IMR-90 (cell line): ENCODE measurements at regions of chr17 and their contacts with region 1.

Region 1: DNA sequence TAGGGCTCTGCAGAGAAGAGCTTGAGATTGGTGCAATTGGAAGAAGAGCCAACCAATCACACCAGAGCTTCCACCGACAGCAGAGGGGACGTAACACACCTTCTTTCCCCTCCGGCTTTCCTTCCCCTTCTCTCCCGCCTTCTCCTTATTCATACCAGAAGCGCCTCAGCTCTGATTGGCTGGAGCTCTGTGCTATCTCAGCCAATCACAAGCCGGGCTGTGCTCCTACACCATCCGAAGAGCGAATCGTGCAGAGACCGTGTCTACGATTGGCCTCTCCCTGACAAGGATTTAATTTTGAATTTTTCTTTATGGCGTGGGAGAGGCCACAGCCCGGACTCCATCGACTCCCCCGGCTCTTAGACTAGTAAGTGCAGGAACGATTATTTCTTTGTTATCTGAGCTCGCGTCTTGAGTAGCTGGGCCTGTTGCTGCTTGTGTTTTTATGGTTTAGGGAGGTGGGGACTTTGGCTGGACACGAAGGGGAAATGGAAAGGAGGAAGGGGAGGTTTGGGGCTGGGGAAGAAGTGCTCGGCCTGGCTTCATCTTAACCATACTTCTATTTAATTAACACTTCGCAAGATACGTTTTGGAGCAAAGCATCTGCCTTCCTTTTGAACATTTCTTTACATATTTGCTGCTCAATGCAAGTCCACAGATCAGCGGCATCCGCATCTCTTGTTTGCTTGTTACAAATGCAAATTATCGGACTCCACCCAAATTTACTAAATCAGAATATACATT is at the start of gene PRR11:
- DNase-seq: peak; percentile 100
- ATAC-seq: peak; percentile 85
- H3K4me3 ChIP-seq: peak within 1 kb of the TSS; percentile 73
- H3K27ac ChIP-seq: peak within 1 kb of the TSS; percentile 89
- H3K4me1 ChIP-seq: 0 out of 2 replicates have a peak, but pooled peaks cover 1% of the 10 kb centered on the region
- H3K27me3 ChIP-seq: no peaks in the 10 kb centered on the region
- CTCF ChIP-seq: no peak
- POLR2A ChIP-seq: no peak; the same call in 1 of the 2 replicates
- RAD21 ChIP-seq: no peak
- total RNA-seq, gene PRR11: 8.6 and 19.7 TPM in 2 replicates

Region 2: DNA sequence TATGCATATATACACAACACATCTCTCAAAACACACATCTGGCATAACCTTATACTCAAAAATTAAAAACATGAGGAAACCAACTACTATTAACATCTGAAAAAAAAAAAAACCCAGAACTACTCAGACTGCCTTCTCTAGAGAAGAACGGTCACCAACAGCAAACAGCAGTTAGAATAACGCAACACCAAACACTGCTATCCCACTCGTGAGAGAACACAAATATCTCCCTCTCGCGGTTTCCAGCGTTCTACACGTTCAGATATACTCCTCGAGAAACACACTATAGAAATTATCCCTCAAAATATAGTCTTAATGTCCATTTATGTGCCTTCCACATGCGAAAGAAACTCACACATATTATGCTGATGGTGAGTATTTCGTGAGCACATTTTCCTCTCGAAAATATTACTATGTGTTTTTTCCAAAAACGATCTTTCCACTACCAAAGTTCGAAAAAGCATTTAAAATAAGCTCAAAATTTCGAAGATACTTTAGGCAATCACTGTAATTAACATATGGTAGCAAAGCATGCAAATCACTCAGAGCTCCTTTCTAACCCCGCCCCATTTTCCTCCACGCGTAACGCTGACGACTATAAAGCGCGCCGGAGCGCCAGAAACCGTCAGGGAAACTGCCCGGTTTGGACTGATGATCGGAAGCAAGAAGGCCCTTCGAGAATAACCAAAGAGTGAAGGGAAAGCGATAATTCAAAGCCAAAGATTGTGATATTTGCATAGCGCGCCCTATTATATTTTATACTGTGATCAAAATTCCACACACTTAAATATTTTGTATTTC is 523.9 kb before region 1 on chr17:
- CTCF ChIA-PET with region 1: no interaction called
- POLR2A ChIA-PET with region 1: no interaction called
- dilution Hi-C with region 1: no loop called
- in situ Hi-C with region 1: no loop called
- intact Hi-C with region 1: loop called (anchors 10 kb)
- DNase-seq: peak; percentile 99
- ATAC-seq: peak; percentile 94
- H3K4me3 ChIP-seq: peak overlapping the region; percentile 42; the same call in 1 of the 2 replicates
- H3K27ac ChIP-seq: peak overlapping the region; percentile 68; the same call in 1 of the 2 replicates
- H3K4me1 ChIP-seq: no peaks in the 10 kb centered on the region
- H3K27me3 ChIP-seq: no peaks in the 10 kb centered on the region
- CTCF ChIP-seq: 0 out of 2 replicates have a peak, but pooled peaks have one; percentile 22
- POLR2A ChIP-seq: peak; percentile 100
- RAD21 ChIP-seq: no peak

Region 3: DNA sequence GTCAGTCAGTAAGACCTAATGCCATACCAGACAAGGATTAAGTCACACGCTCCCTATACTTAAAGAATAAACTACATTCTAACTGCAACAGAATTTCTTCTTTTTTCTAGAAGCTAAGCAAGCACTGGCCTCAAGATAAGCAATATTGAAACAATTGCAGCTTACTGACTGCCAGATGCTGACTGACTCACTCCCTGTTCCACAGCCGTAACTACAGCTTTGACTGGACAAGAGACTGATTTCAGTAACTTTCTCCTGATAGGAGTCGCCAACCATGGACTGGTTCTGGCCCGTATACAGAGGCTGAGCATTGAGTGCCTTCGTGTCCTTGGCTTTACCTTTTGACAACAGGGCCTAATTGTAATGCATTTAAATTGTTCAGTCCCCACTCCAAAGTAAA is 116.9 kb before region 1 on chr17:
- CTCF ChIA-PET with region 1: no interaction called
- POLR2A ChIA-PET with region 1: no interaction called
- dilution Hi-C with region 1: no loop called
- in situ Hi-C with region 1: no loop called
- intact Hi-C with region 1: loop called (anchors 1 kb)
- DNase-seq: peak; percentile 88
- ATAC-seq: peak; percentile 93
- H3K4me3 ChIP-seq: no peak overlapping the region
- H3K27ac ChIP-seq: peak overlapping the region; percentile 33; the same call in 1 of the 2 replicates
- H3K4me1 ChIP-seq: peaks cover 4% of the 10 kb centered on the region
- H3K27me3 ChIP-seq: no peaks in the 10 kb centered on the region
- CTCF ChIP-seq: no peak
- POLR2A ChIP-seq: no peak
- RAD21 ChIP-seq: no peak

Region 4: GRCh38 chr17:59074494-59074893 is 81.1 kb before region 1 on chr17:
- CTCF ChIA-PET with region 1: interaction called, 10 read pairs
- POLR2A ChIA-PET with region 1: no interaction called
- dilution Hi-C with region 1: no loop called
- in situ Hi-C with region 1: no loop called
- intact Hi-C with region 1: no loop called
- DNase-seq: peak; percentile 81
- ATAC-seq: peak; percentile 73
- H3K4me3 ChIP-seq: no peak overlapping the region
- H3K27ac ChIP-seq: no peak overlapping the region
- H3K4me1 ChIP-seq: no peaks in the 10 kb centered on the region
- H3K27me3 ChIP-seq: no peaks in the 10 kb centered on the region
- CTCF ChIP-seq: no peak
- POLR2A ChIP-seq: no peak
- RAD21 ChIP-seq: no peak

Region 5: DNA sequence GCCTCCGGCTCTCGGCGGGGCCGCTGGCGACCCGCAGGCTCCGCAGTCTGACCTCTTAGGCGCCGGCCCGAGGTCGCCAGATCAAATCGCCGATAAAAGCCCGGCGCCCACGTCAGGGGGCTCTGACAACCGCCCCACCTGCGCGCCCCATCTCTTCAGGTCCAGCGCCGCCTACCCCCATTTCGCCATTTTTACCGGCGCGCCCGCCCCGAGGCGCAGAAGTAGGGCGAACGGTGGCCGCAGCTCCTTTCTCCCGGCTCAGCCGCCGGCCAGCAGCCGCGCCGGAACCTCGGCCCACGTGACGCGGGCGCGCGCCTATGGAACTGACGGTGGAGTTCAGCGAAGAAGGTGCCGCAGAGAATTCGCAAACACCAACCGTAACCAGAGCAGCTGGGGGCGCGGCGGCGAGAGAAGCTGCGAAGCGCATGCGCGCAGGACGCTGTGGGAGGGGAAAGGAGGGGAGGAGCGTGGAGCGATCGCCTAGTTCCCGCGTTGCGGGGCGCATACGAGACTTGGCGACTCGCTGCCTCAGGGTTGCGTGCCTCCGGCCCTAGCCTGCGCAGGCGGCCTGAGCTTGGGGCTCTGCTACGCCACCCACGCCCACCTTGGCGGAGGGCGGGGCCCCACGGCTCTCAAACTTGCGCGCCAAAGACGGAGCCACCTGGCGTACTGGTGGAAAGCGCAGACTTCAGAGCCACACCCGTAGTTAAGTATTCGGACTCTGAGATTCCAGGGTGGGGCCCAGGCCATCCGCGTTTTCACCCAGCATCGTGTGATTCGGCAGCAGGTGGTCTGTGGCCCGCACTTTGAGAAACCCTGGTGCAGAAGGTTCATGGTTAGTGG is 48.9 kb before region 1 on chr17 and contains the start of gene TRIM37:
- CTCF ChIA-PET with region 1: no interaction called
- POLR2A ChIA-PET with region 1: interaction called, 3 read pairs
- dilution Hi-C with region 1: no loop called
- in situ Hi-C with region 1: no loop called
- intact Hi-C with region 1: loop called (anchors 1 kb)
- DNase-seq: peak; percentile 99
- ATAC-seq: peak; percentile 97
- H3K4me3 ChIP-seq: peak within 1 kb of the TSS; percentile 64
- H3K27ac ChIP-seq: peak within 1 kb of the TSS; percentile 44
- H3K4me1 ChIP-seq: no peaks in the 10 kb centered on the region
- H3K27me3 ChIP-seq: no peaks in the 10 kb centered on the region
- CTCF ChIP-seq: no peak
- POLR2A ChIP-seq: peak; percentile 79
- RAD21 ChIP-seq: no peak
- total RNA-seq, gene TRIM37: 24.9 and 33.1 TPM in 2 replicates

Region 6: DNA sequence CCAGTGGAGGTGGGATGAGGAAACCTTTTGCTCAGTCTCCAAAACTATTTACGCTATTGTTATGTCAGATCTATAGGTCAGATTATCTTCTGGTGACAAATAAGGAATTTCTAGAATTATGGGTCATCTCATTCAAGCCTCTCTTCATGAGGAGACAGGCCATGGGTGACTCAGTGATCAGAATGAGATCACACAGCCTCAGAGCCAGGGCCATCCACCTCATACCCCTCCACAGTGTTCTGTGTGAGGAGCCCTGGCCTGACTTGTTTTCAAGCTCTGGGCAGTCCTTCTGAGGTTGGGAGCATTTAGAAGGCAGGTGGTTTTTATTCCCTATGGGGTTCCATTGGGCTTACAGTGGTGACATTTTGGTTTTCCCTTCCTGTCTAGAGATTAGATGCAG is 202.3 kb after region 1 on chr17:
- CTCF ChIA-PET with region 1: no interaction called
- POLR2A ChIA-PET with region 1: no interaction called
- dilution Hi-C with region 1: no loop called
- in situ Hi-C with region 1: no loop called
- intact Hi-C with region 1: no loop called
- DNase-seq: peak; percentile 73
- ATAC-seq: no peak
- H3K4me3 ChIP-seq: no peak overlapping the region
- H3K27ac ChIP-seq: no peak overlapping the region
- H3K4me1 ChIP-seq: peaks cover 24% of the 10 kb centered on the region
- H3K27me3 ChIP-seq: peaks cover 2% of the 10 kb centered on the region; the same call in 1 of the 2 replicates
- CTCF ChIP-seq: no peak
- POLR2A ChIP-seq: no peak
- RAD21 ChIP-seq: no peak